Heart left ventricle (tissue), 16 donors: ENCODE measurements at regions of chr20 and their contacts with region 1.

Region 1: DNA sequence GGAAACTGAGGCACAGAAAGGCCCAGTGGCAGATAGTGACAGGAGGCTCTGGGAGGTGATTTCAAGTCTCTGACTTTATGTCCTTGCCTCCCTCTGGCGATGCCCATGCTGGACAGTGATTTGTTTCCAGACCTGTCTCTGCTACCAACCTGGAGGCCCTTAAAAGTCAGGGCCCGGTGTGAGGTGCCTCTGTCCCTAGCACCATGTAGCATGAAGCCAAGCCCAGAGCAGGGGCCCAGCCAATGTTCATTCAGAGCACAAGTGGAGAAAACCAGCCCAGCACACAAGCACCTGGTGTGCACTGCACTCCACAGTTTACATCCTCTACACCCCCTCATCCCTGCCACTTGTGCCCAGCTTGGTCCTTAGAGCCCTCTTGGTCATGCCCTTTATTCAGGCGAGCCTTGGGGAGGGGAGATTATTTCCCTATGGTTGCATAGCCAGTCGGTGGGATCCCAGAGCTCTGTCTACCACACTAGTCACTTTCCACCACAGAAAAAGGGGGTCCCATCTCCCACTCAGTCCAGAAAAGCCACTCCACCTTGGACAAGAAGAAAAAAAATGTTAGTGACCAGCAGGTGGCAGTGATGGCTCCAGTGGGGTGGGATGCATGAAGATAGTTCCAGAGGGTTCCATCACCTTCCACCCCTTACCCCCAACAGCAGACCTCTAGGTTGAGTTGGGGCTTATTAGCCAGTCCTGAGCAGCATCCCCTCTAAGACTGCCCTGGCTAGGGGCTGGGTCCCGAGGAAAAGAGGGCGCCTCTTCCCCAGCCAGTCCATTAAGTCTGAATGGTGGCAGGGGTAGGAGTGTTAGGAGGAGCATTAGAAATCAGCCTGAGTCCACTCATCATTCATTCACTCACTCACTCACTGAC is 30.9 kb downstream of the KIAA1755 start:
- DNase-seq: peak in 1 of 5 donors; percentile 17
- ATAC-seq: peak in 1 of 4 donors; percentile 15
- H3K4me3 ChIP-seq: no peak overlapping the region
- H3K27ac ChIP-seq: no peak overlapping the region
- H3K4me1 ChIP-seq: peaks cover 0 to 15% (median 0%) of the 10 kb centered on the region in 12 donors
- H3K27me3 ChIP-seq: no peaks in the 10 kb centered on the region
- CTCF ChIP-seq: peak; percentile 27 to 60 (median 49)
- POLR2A ChIP-seq: no peak

Region 2: DNA sequence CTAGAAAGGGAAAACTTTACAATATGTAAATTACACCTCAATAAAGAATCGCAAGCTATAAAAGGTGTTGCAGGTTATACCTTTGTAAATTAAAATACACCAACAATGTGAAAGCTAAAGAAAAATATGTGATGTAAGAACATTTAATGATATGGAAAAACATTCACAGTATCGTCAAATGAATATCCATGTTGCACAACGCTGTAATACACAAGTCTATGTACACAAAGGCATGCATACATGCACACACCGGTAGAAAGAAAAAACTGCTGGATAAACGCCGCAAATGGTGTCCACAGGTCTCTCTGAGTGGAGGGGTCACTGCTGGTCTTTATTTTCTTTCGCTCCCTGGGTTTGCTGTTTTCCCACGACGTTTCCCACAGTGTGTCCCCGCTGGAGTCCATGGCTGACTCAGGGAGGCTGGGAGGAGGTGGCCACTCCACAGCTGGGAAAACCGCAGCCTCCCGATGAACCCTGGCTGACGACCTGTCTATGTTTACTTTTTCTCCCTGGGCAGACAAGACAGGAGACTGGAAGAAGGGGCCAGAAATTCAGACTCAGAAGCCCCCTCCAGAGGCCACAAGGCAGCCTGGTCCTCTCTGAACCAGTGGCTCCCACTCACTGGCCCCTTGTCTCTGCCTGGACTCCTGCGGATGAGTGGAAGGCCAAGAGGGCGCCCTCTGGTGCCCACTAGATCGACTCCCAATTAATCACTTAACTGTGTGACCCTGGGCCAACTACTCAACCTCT is 61.4 kb after region 1 on chr20:
- intact Hi-C with region 1: loop called in 4 of 10 experiments (anchors 5 to 10 kb)
- DNase-seq: peak; percentile 51 to 76 (median 66)
- ATAC-seq: peak; percentile 8 to 90 (median 76)
- H3K4me3 ChIP-seq: peak overlapping the region in 1 of 12 donors; percentile 7
- H3K27ac ChIP-seq: peak overlapping the region in 1 of 12 donors; percentile 19
- H3K4me1 ChIP-seq: peaks cover 0 to 34% (median 0%) of the 10 kb centered on the region in 12 donors
- H3K27me3 ChIP-seq: peaks cover 0 to 5% (median 0%) of the 10 kb centered on the region in 9 donors
- CTCF ChIP-seq: peak; percentile 18 to 63 (median 36)
- POLR2A ChIP-seq: no peak

Region 3: DNA sequence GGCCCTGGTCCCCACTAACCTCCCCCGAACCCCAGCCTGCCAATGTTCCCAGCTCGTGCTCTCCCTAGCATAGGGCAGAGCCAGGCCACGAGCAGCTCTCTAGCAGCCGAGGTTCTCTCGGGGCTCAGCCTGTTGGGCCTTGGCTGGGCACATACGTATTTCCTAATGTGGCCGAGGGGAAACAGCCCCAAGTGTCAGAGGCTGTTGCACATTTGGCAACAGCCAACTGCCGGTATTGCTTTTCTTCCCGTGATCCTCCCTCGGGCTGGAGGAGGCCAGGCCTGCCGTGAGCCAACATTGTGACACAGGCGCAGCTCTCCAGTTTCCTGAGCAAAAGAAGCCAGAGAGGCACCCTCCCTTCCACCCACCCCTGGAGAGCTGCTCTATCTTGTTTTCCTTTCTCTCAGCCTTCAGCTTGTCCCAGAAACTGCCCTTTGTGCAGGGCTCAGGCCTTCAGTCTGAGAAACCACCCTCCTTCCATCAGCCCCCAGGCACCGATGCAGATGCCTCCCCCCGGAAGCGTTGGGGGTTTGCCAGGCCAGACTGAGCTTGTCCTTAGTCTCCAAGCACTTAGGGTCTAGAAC is 69.2 kb after region 1 on chr20:
- intact Hi-C with region 1: loop called in 3 of 10 experiments (anchors 5 to 10 kb)
- DNase-seq: peak; percentile 74 to 87 (median 78)
- ATAC-seq: peak; percentile 81 to 95 (median 93)
- H3K4me3 ChIP-seq: no peak overlapping the region
- H3K27ac ChIP-seq: peak overlapping the region; percentile 57 to 85 (median 73)
- H3K4me1 ChIP-seq: peaks cover 0 to 35% (median 10%) of the 10 kb centered on the region in 12 donors
- H3K27me3 ChIP-seq: peaks cover 0 to 9% (median 0%) of the 10 kb centered on the region in 9 donors
- CTCF ChIP-seq: no peak
- POLR2A ChIP-seq: no peak

Region 4: DNA sequence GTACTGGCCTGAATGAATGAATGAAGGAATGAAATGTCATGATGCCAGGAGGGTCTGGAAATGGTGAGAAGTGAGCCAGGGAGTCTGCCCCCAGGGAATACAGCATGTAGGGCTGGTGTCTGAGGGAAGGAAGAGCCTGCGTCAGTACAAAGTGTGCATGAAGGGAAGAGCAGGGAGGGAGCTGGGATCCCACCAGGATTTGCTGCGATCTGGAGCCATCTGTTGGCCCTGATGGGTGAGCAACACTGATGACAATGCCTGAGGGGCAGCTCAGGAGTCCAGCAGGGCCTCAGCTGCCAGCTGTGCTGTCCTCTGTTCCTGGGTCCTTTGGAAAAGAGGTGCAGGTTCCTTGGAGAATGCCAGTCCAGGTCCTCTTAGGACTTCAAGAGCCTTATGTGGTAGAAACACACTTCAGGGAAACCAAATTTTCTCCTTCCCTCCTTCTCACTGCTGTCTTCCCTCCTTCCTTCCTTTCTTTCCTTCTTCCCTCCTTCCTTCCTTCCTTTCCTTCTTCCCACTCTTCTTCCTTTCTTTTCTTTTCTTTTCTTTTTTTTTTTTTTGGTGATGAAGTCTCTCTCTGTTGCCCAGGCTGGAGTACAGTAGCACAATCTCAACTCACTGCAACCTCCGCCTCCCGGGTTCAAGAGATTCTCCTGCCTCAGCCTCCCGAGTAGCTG is 85.8 kb after region 1 on chr20:
- intact Hi-C with region 1: loop called in 8 of 10 experiments (anchors 5 kb)
- DNase-seq: no peak
- ATAC-seq: peak in 1 of 4 donors; percentile 28
- H3K4me3 ChIP-seq: no peak overlapping the region
- H3K27ac ChIP-seq: no peak overlapping the region
- H3K4me1 ChIP-seq: no peaks in the 10 kb centered on the region
- H3K27me3 ChIP-seq: peaks cover 0 to 10% (median 2%) of the 10 kb centered on the region in 9 donors
- CTCF ChIP-seq: peak in 3 of 12 donors; percentile 14 to 30 (median 17)
- POLR2A ChIP-seq: no peak

Region 5: DNA sequence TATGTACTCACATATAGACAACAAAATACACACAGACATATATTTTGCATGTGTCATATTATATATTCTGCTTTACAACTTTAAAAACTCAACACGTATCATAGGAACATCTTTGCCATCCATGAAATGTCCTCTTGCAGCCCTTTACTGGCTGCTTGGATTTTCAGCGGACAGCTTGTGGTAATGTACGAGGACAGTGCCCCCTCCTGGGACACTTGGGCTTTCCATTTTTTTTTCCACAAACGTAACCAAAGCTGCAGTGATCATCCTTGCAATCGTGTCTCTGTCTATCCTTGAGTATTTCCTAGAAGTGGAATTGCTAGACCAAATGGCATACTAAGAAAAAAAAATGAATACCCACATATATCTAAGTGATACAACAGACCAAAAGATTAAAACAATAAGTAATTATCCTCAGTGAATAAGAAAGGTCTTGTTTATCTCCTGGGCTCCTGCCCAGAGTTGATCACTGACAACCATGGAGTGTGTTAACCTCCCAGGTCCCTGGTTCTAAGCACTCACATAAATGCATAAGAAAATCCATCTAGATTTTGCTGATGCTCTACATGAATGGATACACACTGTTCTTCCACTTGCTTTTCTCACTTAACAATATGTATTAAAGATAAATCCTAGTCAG is 92.5 kb after region 1 on chr20:
- intact Hi-C with region 1: loop called in 9 of 10 experiments (anchors 2 to 5 kb)
- DNase-seq: peak in 3 of 5 donors; percentile 30 to 40 (median 38)
- ATAC-seq: peak in 3 of 4 donors; percentile 50 to 71 (median 55)
- H3K4me3 ChIP-seq: no peak overlapping the region
- H3K27ac ChIP-seq: no peak overlapping the region
- H3K4me1 ChIP-seq: no peaks in the 10 kb centered on the region
- H3K27me3 ChIP-seq: peaks cover 0 to 11% (median 4%) of the 10 kb centered on the region in 9 donors
- CTCF ChIP-seq: peak; percentile 31 to 75 (median 62)
- POLR2A ChIP-seq: no peak

Region 6: GRCh38 chr20:38406476-38406875 is 176.9 kb after region 1 on chr20:
- intact Hi-C with region 1: loop called in 9 of 10 experiments (anchors 5 to 10 kb)
- DNase-seq: no peak
- ATAC-seq: no peak
- H3K4me3 ChIP-seq: no peak overlapping the region
- H3K27ac ChIP-seq: no peak overlapping the region
- H3K4me1 ChIP-seq: peaks cover 0 to 2% (median 0%) of the 10 kb centered on the region in 12 donors
- H3K27me3 ChIP-seq: no peaks in the 10 kb centered on the region
- CTCF ChIP-seq: no peak
- POLR2A ChIP-seq: no peak